Mammary epithelial cell (primary cell): ENCODE measurements at regions of chr1 and their contacts with region 1.

Region 1: GRCh38 chr1:245652660-245653427 is 498.1 kb downstream of the KIF26B start:
- DNase-seq: no peak
- H3K4me3 ChIP-seq: no peak overlapping the region
- H3K27ac ChIP-seq: no peak overlapping the region
- H3K4me1 ChIP-seq: no peaks in the 10 kb centered on the region
- H3K27me3 ChIP-seq: no peaks in the 10 kb centered on the region
- CTCF ChIP-seq: no peak

Region 2: GRCh38 chr1:245493029-245493428 is 159.8 kb before region 1 on chr1:
- CTCF ChIA-PET with region 1: no interaction called
- dilution Hi-C with region 1: no loop called
- in situ Hi-C with region 1: no loop called
- intact Hi-C with region 1: no loop called
- DNase-seq: no peak
- H3K4me3 ChIP-seq: no peak overlapping the region
- H3K27ac ChIP-seq: no peak overlapping the region
- H3K4me1 ChIP-seq: peaks cover 7% of the 10 kb centered on the region
- H3K27me3 ChIP-seq: no peaks in the 10 kb centered on the region
- CTCF ChIP-seq: peak in 1 of 2 donors; percentile 8

Region 3: GRCh38 chr1:245585252-245585959 is 67.4 kb before region 1 on chr1:
- CTCF ChIA-PET with region 1: no interaction called
- dilution Hi-C with region 1: loop called (anchors 5 kb)
- in situ Hi-C with region 1: no loop called
- intact Hi-C with region 1: loop called (anchors 10 kb)
- DNase-seq: peak; percentile 82
- H3K4me3 ChIP-seq: no peak overlapping the region
- H3K27ac ChIP-seq: no peak overlapping the region
- H3K4me1 ChIP-seq: no peaks in the 10 kb centered on the region
- H3K27me3 ChIP-seq: no peaks in the 10 kb centered on the region
- CTCF ChIP-seq: no peak

Region 4: GRCh38 chr1:245605480-245606161 is 47.2 kb before region 1 on chr1:
- CTCF ChIA-PET with region 1: no interaction called
- dilution Hi-C with region 1: no loop called
- in situ Hi-C with region 1: no loop called
- intact Hi-C with region 1: no loop called
- DNase-seq: peak; percentile 65
- H3K4me3 ChIP-seq: no peak overlapping the region
- H3K27ac ChIP-seq: no peak overlapping the region
- H3K4me1 ChIP-seq: no peaks in the 10 kb centered on the region
- H3K27me3 ChIP-seq: no peaks in the 10 kb centered on the region
- CTCF ChIP-seq: no peak

Region 5: GRCh38 chr1:245724763-245725162 is 71.9 kb after region 1 on chr1:
- CTCF ChIA-PET with region 1: no interaction called
- dilution Hi-C with region 1: loop called (anchors 5 kb)
- in situ Hi-C with region 1: no loop called
- intact Hi-C with region 1: no loop called
- DNase-seq: peak; percentile 41
- H3K4me3 ChIP-seq: no peak overlapping the region
- H3K27ac ChIP-seq: no peak overlapping the region
- H3K4me1 ChIP-seq: no peaks in the 10 kb centered on the region
- H3K27me3 ChIP-seq: no peaks in the 10 kb centered on the region
- CTCF ChIP-seq: no peak